B cell (primary cell): ENCODE measurements at regions of chr11 and their contacts with region 1.

Region 1: DNA sequence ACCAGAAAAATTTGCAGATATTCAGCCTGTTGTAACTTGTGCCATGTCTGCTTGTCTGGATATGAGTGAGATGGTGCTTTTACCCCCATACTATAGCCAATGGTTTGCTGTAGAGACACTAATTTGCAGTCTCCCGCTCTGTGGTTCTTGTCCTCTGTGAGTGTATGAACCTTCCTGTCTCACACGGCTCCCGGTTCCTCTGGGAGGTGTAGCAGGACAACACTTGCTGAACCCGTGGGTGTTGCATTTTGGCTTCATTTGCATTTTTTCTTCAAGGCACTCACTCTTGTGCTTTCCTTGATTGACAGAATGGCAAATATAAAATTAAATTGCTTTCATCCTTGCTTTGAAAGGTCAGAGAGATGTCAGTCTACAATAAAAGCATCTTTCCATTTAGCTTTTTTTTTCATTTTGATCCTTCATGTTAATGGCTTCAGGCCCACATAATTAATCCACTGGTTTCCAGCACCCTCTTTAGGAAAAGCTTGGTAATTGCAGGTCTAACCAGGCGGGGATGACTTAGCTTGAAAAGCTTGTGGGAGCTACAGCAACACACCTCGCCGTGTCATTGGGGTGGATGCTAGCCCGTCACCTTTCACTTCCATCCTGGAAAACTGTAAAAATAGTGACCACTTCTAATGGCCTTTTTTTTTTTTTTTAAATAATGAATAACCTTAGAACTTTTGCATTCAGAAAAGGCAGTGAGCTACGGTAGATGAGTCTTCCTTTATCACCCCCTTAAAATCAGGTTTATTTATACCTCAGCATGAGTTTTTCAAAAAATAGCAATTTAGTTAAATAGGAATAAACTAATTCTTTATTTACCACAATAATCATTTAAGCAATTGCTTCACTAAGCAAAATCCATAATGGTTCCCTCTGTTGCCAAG is 27.4 kb upstream of the ST14 start:
- DNase-seq: peak; percentile 81
- ATAC-seq: peak; percentile 89
- H3K4me3 ChIP-seq: no peak overlapping the region
- H3K4me3 Mint-ChIP-seq: no peak overlapping the region
- H3K27ac ChIP-seq: no peak overlapping the region
- H3K27ac Mint-ChIP-seq: no peak overlapping the region
- H3K4me1 ChIP-seq: peaks cover 0 to 9% of the 10 kb centered on the region in 2 donors
- H3K4me1 Mint-ChIP-seq: peaks cover 14% of the 10 kb centered on the region
- H3K27me3 ChIP-seq: no peaks in the 10 kb centered on the region
- H3K27me3 Mint-ChIP-seq: no peaks in the 10 kb centered on the region
- CTCF ChIP-seq: peak; percentile 88

Region 2: GRCh38 chr11:129881570-129882170 is 250.5 kb before region 1 on chr11:
- CTCF ChIA-PET with region 1: interaction called, 14 read pairs
- POLR2A ChIA-PET with region 1: no interaction called
- intact Hi-C with region 1: loop called (anchors 1 kb)
- DNase-seq: peak; percentile 13
- ATAC-seq: no peak
- H3K4me3 ChIP-seq: no peak overlapping the region
- H3K4me3 Mint-ChIP-seq: no peak overlapping the region
- H3K27ac ChIP-seq: no peak overlapping the region
- H3K27ac Mint-ChIP-seq: no peak overlapping the region
- H3K4me1 ChIP-seq: no peaks in the 10 kb centered on the region
- H3K4me1 Mint-ChIP-seq: no peaks in the 10 kb centered on the region
- H3K27me3 ChIP-seq: no peaks in the 10 kb centered on the region
- H3K27me3 Mint-ChIP-seq: no peaks in the 10 kb centered on the region
- CTCF ChIP-seq: peak; percentile 40

Region 3: DNA sequence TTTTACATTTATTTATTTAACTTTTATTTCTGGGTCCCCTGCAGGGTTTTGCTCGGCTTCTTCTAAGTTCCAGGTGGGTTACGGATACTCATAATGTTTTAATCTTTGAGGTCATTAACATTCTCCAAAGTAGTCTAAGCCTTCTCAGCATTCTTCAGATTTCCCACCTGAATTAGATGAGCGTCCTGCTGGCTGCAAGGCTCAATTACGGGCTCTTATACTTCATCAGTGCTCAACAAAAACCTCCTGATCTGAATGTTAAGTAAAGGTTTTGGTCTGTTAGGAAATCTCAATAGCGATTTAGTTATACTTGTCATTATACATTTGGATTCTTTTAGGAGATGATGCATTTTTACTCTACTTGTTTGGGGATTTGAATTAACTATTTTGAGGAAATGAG is 209.5 kb before region 1 on chr11:
- CTCF ChIA-PET with region 1: interaction called, 339 read pairs
- POLR2A ChIA-PET with region 1: interaction called, 3 read pairs
- intact Hi-C with region 1: loop called (anchors 1 kb)
- DNase-seq: no peak
- ATAC-seq: no peak
- H3K4me3 ChIP-seq: no peak overlapping the region
- H3K4me3 Mint-ChIP-seq: no peak overlapping the region
- H3K27ac ChIP-seq: no peak overlapping the region
- H3K27ac Mint-ChIP-seq: no peak overlapping the region
- H3K4me1 ChIP-seq: peaks cover 0 to 8% of the 10 kb centered on the region in 2 donors
- H3K4me1 Mint-ChIP-seq: peaks cover 4% of the 10 kb centered on the region
- H3K27me3 ChIP-seq: no peaks in the 10 kb centered on the region
- H3K27me3 Mint-ChIP-seq: no peaks in the 10 kb centered on the region
- CTCF ChIP-seq: no peak

Region 4: GRCh38 chr11:129973068-129973467 is 159.1 kb before region 1 on chr11:
- CTCF ChIA-PET with region 1: interaction called, 20 read pairs
- POLR2A ChIA-PET with region 1: no interaction called
- intact Hi-C with region 1: no loop called
- DNase-seq: peak; percentile 57
- ATAC-seq: peak; percentile 60
- H3K4me3 ChIP-seq: peak overlapping the region in 1 of 5 experiments; percentile 9
- H3K4me3 Mint-ChIP-seq: peak overlapping the region; percentile 77
- H3K27ac ChIP-seq: no peak overlapping the region
- H3K27ac Mint-ChIP-seq: no peak overlapping the region
- H3K4me1 ChIP-seq: peaks cover 22 to 28% of the 10 kb centered on the region in 2 donors
- H3K4me1 Mint-ChIP-seq: peaks cover 31% of the 10 kb centered on the region
- H3K27me3 ChIP-seq: peaks cover 0 to 32% (median 2%) of the 10 kb centered on the region in 4 experiments
- H3K27me3 Mint-ChIP-seq: peaks cover 26% of the 10 kb centered on the region
- CTCF ChIP-seq: no peak

Region 5: GRCh38 chr11:130002846-130003716 is 129.1 kb before region 1 on chr11:
- CTCF ChIA-PET with region 1: interaction called, 63 read pairs
- POLR2A ChIA-PET with region 1: interaction called, 12 read pairs
- intact Hi-C with region 1: loop called (anchors 1 kb)
- DNase-seq: peak; percentile 99
- ATAC-seq: peak; percentile 76
- H3K4me3 ChIP-seq: peak overlapping the region; percentile 74 to 94 (median 83)
- H3K4me3 Mint-ChIP-seq: peak overlapping the region; percentile 100
- H3K27ac ChIP-seq: peak overlapping the region; percentile 100
- H3K27ac Mint-ChIP-seq: peak overlapping the region; percentile 100
- H3K4me1 ChIP-seq: peaks cover 21 to 27% of the 10 kb centered on the region in 2 donors
- H3K4me1 Mint-ChIP-seq: peaks cover 33% of the 10 kb centered on the region
- H3K27me3 ChIP-seq: peaks cover 0 to 6% (median 2%) of the 10 kb centered on the region in 4 experiments
- H3K27me3 Mint-ChIP-seq: peaks cover 19% of the 10 kb centered on the region
- CTCF ChIP-seq: no peak

Region 6: GRCh38 chr11:130069684-130070108 is 62.5 kb before region 1 on chr11 and contains the start of gene APLP2:
- CTCF ChIA-PET with region 1: interaction called, 29 read pairs
- POLR2A ChIA-PET with region 1: interaction called, 4 read pairs
- intact Hi-C with region 1: no loop called
- DNase-seq: peak; percentile 98
- ATAC-seq: peak; percentile 94
- H3K4me3 ChIP-seq: peak within 1 kb of the TSS; percentile 64 to 90 (median 81)
- H3K4me3 Mint-ChIP-seq: peak within 1 kb of the TSS; percentile 98
- H3K27ac ChIP-seq: peak within 1 kb of the TSS; percentile 58 to 73
- H3K27ac Mint-ChIP-seq: peak within 1 kb of the TSS; percentile 96
- H3K4me1 ChIP-seq: peaks cover 22 to 25% of the 10 kb centered on the region in 2 donors
- H3K4me1 Mint-ChIP-seq: peaks cover 36% of the 10 kb centered on the region
- H3K27me3 ChIP-seq: peaks cover 0 to 3% (median 0%) of the 10 kb centered on the region in 4 experiments
- H3K27me3 Mint-ChIP-seq: peaks cover 10% of the 10 kb centered on the region
- CTCF ChIP-seq: no peak
- total RNA-seq, gene APLP2: 102 and 111 TPM in 2 replicates

Region 7: GRCh38 chr11:130096823-130097222 is 35.4 kb before region 1 on chr11:
- CTCF ChIA-PET with region 1: no interaction called
- POLR2A ChIA-PET with region 1: no interaction called
- intact Hi-C with region 1: no loop called
- DNase-seq: no peak
- ATAC-seq: no peak
- H3K4me3 ChIP-seq: no peak overlapping the region
- H3K4me3 Mint-ChIP-seq: no peak overlapping the region
- H3K27ac ChIP-seq: no peak overlapping the region
- H3K27ac Mint-ChIP-seq: no peak overlapping the region
- H3K4me1 ChIP-seq: peaks cover 8 to 13% of the 10 kb centered on the region in 2 donors
- H3K4me1 Mint-ChIP-seq: peaks cover 46% of the 10 kb centered on the region
- H3K27me3 ChIP-seq: no peaks in the 10 kb centered on the region
- H3K27me3 Mint-ChIP-seq: no peaks in the 10 kb centered on the region
- CTCF ChIP-seq: no peak

Region 8: GRCh38 chr11:130145975-130146776 is 14.0 kb after region 1 on chr11:
- CTCF ChIA-PET with region 1: interaction called, 47 read pairs
- POLR2A ChIA-PET with region 1: no interaction called
- intact Hi-C with region 1: no loop called
- DNase-seq: no peak
- ATAC-seq: peak; percentile 23
- H3K4me3 ChIP-seq: no peak overlapping the region
- H3K4me3 Mint-ChIP-seq: peak overlapping the region; percentile 30
- H3K27ac ChIP-seq: peak overlapping the region; percentile 61 to 75
- H3K27ac Mint-ChIP-seq: peak overlapping the region; percentile 68
- H3K4me1 ChIP-seq: peaks cover 16 to 34% of the 10 kb centered on the region in 2 donors
- H3K4me1 Mint-ChIP-seq: peaks cover 37% of the 10 kb centered on the region
- H3K27me3 ChIP-seq: no peaks in the 10 kb centered on the region
- H3K27me3 Mint-ChIP-seq: no peaks in the 10 kb centered on the region
- CTCF ChIP-seq: no peak

Region 9: DNA sequence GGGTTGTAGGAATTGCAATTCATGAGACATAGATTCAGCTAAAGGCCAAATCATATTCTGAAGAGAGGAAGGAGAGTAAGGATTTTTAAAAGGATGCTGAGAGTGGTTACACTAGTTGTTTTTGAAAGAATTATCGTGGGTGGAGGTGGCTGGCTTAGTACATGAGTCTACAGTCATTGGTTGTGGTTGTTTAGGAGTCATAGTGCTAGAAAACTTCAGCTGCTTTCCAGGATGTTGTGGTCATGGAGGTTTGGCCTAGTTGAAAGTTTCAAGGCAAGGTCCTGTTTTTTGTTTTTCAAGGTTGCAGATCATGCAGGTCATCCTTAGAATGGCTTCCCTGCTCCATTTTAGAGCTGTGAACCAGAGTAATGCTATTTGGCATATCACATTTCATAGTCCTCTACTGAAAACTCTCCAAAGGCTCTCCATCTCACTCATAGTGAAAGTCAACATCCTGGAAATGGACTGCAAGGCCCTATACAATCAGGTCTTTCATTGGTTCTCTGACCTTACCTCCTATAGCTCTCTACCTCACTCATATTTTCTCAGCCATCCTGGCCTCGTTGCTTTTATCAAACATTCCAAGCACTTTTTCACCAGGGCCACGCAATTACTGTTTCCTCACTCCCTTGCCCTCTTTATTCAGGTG is 208.6 kb after region 1 on chr11:
- CTCF ChIA-PET with region 1: no interaction called
- POLR2A ChIA-PET with region 1: no interaction called
- intact Hi-C with region 1: no loop called
- DNase-seq: no peak
- ATAC-seq: no peak
- H3K4me3 ChIP-seq: no peak overlapping the region
- H3K4me3 Mint-ChIP-seq: no peak overlapping the region
- H3K27ac ChIP-seq: no peak overlapping the region
- H3K27ac Mint-ChIP-seq: no peak overlapping the region
- H3K4me1 ChIP-seq: no peaks in the 10 kb centered on the region
- H3K4me1 Mint-ChIP-seq: no peaks in the 10 kb centered on the region
- H3K27me3 ChIP-seq: no peaks in the 10 kb centered on the region
- H3K27me3 Mint-ChIP-seq: peaks cover 5% of the 10 kb centered on the region
- CTCF ChIP-seq: no peak